IMR-90 (cell line): ENCODE measurements at regions of chr2 and their contacts with region 1.

Region 1: DNA sequence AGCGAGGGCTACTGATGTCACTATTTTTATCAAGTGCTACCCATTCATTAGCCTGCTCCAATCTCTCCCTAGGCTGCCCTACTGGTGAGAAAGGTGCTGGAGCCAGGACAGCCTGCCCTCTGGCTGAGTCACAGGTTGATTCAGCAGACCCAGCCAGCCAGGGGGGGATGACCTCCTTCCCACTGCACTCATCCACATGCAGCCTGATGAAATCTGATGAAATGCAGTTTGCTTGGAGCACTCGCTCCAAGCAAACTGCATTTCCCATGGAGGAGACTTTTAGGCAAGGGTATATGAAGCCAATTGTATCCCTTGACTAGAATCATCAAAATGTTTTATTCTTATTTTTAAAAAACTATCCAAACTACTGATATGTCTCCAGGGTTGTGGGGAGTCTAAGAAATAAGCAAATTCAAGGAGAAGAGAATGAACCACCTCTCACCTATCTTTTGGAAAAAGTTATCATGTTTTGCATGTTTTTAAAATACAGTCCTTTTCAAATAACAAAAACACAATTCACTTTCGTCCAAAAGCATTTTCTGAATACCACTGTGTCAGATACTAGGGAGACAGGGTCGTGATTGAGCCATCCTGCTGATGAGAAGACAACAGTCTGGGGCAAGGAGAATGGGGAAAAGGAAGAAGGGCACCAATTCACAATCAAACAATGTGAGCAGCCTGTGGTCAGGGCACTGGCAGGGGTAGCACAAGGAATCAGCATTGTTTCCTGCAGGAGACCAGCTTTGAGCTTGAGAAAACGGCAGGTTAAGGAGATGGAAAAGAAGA is 128.3 kb downstream of the AFF3 start:
- DNase-seq: peak; percentile 99
- ATAC-seq: peak; percentile 79
- H3K4me3 ChIP-seq: no peak overlapping the region
- H3K27ac ChIP-seq: peak overlapping the region; percentile 99
- H3K4me1 ChIP-seq: peaks cover 46% of the 10 kb centered on the region
- H3K27me3 ChIP-seq: no peaks in the 10 kb centered on the region
- CTCF ChIP-seq: peak; percentile 29
- POLR2A ChIP-seq: peak; percentile 41; the same call in 1 of the 2 replicates
- RAD21 ChIP-seq: peak; percentile 27

Region 2: GRCh38 chr2:99725820-99726219 is 288.3 kb before region 1 on chr2:
- CTCF ChIA-PET with region 1: interaction called, 3 read pairs
- POLR2A ChIA-PET with region 1: no interaction called
- dilution Hi-C with region 1: no loop called
- in situ Hi-C with region 1: no loop called
- intact Hi-C with region 1: loop called (anchors 5 kb)
- DNase-seq: peak; percentile 28
- ATAC-seq: no peak
- H3K4me3 ChIP-seq: no peak overlapping the region
- H3K27ac ChIP-seq: no peak overlapping the region; the same call in 1 of the 2 replicates
- H3K4me1 ChIP-seq: peaks cover 16% of the 10 kb centered on the region
- H3K27me3 ChIP-seq: no peaks in the 10 kb centered on the region
- CTCF ChIP-seq: peak; percentile 59
- POLR2A ChIP-seq: no peak
- RAD21 ChIP-seq: peak; percentile 69

Region 3: GRCh38 chr2:99881901-99882591 is 132.0 kb before region 1 on chr2:
- CTCF ChIA-PET with region 1: interaction called, 4 read pairs
- POLR2A ChIA-PET with region 1: no interaction called
- dilution Hi-C with region 1: no loop called
- in situ Hi-C with region 1: no loop called
- intact Hi-C with region 1: loop called (anchors 1 kb)
- DNase-seq: peak; percentile 95
- ATAC-seq: peak; percentile 46
- H3K4me3 ChIP-seq: no peak overlapping the region
- H3K27ac ChIP-seq: peak overlapping the region; percentile 86
- H3K4me1 ChIP-seq: peaks cover 22% of the 10 kb centered on the region
- H3K27me3 ChIP-seq: no peaks in the 10 kb centered on the region
- CTCF ChIP-seq: no peak
- POLR2A ChIP-seq: peak; percentile 57
- RAD21 ChIP-seq: peak; percentile 30; the same call in 1 of the 2 replicates

Region 4: GRCh38 chr2:99974275-99974674 is 39.8 kb before region 1 on chr2:
- CTCF ChIA-PET with region 1: no interaction called
- POLR2A ChIA-PET with region 1: no interaction called
- dilution Hi-C with region 1: no loop called
- in situ Hi-C with region 1: no loop called
- intact Hi-C with region 1: no loop called
- DNase-seq: peak; percentile 44
- ATAC-seq: 0 out of 2 replicates have a peak, but pooled peaks have one; percentile 11
- H3K4me3 ChIP-seq: no peak overlapping the region
- H3K27ac ChIP-seq: no peak overlapping the region
- H3K4me1 ChIP-seq: peaks cover 27% of the 10 kb centered on the region
- H3K27me3 ChIP-seq: no peaks in the 10 kb centered on the region
- CTCF ChIP-seq: no peak
- POLR2A ChIP-seq: no peak
- RAD21 ChIP-seq: no peak

Region 5: DNA sequence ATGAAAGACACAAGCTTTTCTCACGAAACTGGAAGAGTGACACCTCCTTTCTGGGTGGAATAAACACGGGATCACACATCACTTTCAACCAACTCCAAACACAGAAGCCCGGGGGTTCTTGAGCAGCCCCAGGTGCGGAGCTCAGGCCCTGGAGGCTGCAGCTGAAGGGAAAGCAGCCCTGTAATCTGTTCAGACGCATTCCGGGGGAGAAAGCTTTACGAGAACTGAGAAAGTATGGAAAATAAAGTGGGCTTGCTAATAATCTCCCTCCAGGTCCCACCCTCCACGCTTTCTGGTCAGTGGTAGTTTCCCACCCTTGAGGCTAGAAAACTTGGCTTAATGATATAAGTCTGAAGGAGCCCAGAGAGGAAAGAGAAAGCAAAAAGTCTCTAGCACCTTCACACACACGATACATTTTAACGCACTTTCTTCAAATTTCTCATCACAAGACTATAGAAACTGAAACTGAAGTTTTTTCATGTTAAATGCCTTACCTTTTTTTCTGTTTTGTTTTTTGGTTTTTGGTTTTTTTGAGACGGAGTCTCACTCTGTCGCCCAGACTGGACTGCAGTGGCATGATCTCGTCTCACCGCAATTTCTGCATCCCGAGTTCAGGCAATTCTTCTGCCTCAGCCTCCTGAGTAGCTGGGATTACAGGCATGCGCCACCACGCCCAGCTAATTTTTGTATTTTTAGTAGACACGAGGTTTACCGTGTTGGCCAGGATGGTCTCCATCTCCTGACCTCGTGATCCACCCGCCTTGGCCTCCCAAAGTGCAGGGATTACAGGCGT is 13.0 kb before region 1 on chr2:
- CTCF ChIA-PET with region 1: no interaction called
- POLR2A ChIA-PET with region 1: interaction called, 18 read pairs
- dilution Hi-C with region 1: no loop called
- in situ Hi-C with region 1: no loop called
- intact Hi-C with region 1: no loop called
- DNase-seq: no peak
- ATAC-seq: no peak
- H3K4me3 ChIP-seq: no peak overlapping the region
- H3K27ac ChIP-seq: no peak overlapping the region
- H3K4me1 ChIP-seq: peaks cover 10% of the 10 kb centered on the region
- H3K27me3 ChIP-seq: no peaks in the 10 kb centered on the region
- CTCF ChIP-seq: no peak
- POLR2A ChIP-seq: no peak
- RAD21 ChIP-seq: no peak

Region 6: DNA sequence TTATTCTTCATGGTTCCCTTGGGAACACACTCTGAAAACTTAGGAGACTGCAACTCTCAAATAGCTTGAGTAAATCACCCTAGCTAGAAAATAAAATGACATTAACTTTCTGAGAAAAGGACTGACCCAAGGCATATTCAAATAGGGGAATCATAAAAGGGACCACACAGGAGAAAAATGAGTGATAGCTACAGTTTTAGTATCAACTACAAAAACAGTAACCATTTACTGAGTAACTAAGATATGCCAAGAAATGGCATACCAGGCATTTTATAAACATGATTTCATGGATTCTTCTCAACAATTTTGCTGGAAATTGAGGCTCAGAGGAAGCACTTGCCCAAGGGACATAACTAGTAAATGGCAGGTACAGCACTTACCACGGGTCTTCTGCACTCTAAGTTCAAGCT is 43.8 kb after region 1 on chr2:
- CTCF ChIA-PET with region 1: no interaction called
- POLR2A ChIA-PET with region 1: no interaction called
- dilution Hi-C with region 1: no loop called
- in situ Hi-C with region 1: no loop called
- intact Hi-C with region 1: loop called (anchors 2 kb)
- DNase-seq: peak; percentile 49
- ATAC-seq: peak; percentile 36; the same call in 1 of the 2 replicates
- H3K4me3 ChIP-seq: no peak overlapping the region
- H3K27ac ChIP-seq: no peak overlapping the region
- H3K4me1 ChIP-seq: peaks cover 16% of the 10 kb centered on the region
- H3K27me3 ChIP-seq: no peaks in the 10 kb centered on the region
- CTCF ChIP-seq: no peak
- POLR2A ChIP-seq: no peak
- RAD21 ChIP-seq: no peak

Region 7: GRCh38 chr2:100104718-100105677 is 90.9 kb after region 1 on chr2:
- CTCF ChIA-PET with region 1: no interaction called
- POLR2A ChIA-PET with region 1: no interaction called
- dilution Hi-C with region 1: no loop called
- in situ Hi-C with region 1: no loop called
- intact Hi-C with region 1: loop called (anchors 5 kb)
- DNase-seq: peak; percentile 11
- ATAC-seq: peak; percentile 78
- H3K4me3 ChIP-seq: peak overlapping the region; percentile 46
- H3K27ac ChIP-seq: peak overlapping the region; percentile 73
- H3K4me1 ChIP-seq: peaks cover 14% of the 10 kb centered on the region
- H3K27me3 ChIP-seq: no peaks in the 10 kb centered on the region
- CTCF ChIP-seq: no peak
- POLR2A ChIP-seq: no peak
- RAD21 ChIP-seq: no peak